ENCODE measurements at regions of chrX and their contacts with region 1.

Region 1: GRCh38 chrX:48521353-48522243 is at the start of gene EBP:
- DNase-seq: peak; percentile 88 to 96 (median 94)
- H3K4me3 ChIP-seq: peak within 1 kb of the TSS; percentile 85
- H3K4me3 Mint-ChIP-seq: peak within 1 kb of the TSS; percentile 84 to 97 (median 90)
- H3K27ac ChIP-seq: peak within 1 kb of the TSS; percentile 83
- H3K27ac Mint-ChIP-seq: peak within 1 kb of the TSS; percentile 87 to 96 (median 96)
- H3K4me1 ChIP-seq: peaks cover 17% of the 10 kb centered on the region
- H3K4me1 Mint-ChIP-seq: peaks cover 22 to 47% (median 25%) of the 10 kb centered on the region in 3 donors
- H3K27me3 ChIP-seq: no peaks in the 10 kb centered on the region
- H3K27me3 Mint-ChIP-seq: peaks cover 0 to 2% of the 10 kb centered on the region in 2 donors
- total RNA-seq, gene EBP: 150 to 153 TPM

Region 2: DNA sequence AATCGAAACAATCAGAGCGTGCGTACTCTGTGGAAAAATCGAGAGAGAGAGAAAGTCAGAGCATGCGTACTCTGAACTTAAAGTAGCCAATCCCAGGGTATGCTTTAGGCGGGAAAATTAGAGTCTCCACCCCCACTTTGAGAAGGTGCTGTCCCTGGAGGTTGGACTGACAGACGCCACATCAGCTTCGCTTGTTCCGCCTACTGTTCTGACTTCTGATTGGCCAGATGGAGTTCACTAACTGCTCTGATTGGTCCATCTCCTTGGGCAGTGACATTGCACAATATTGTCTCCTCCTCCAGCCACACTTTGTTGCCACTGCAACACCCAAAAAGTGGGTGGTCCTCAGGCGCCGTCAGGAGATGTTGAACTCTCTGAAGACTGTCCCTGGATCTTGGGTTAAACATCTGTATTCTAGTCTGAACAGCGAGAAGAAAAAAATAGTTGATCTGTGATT is 324.8 kb before region 1 on chrX and contains the start of gene SSX5:
- CTCF ChIA-PET with region 1: no interaction called
- POLR2A ChIA-PET with region 1: interaction called, 10 read pairs
- DNase-seq: no peak
- H3K4me3 ChIP-seq: no peak within 1 kb of the TSS
- H3K4me3 Mint-ChIP-seq: no peak within 1 kb of the TSS
- H3K27ac ChIP-seq: no peak within 1 kb of the TSS
- H3K27ac Mint-ChIP-seq: peak within 1 kb of the TSS in 1 of 8 donors; percentile 19
- H3K4me1 ChIP-seq: no peaks in the 10 kb centered on the region
- H3K4me1 Mint-ChIP-seq: no peaks in the 10 kb centered on the region
- H3K27me3 ChIP-seq: no peaks in the 10 kb centered on the region
- H3K27me3 Mint-ChIP-seq: peaks cover 3 to 11% of the 10 kb centered on the region in 2 donors
- total RNA-seq, gene SSX5: not detected